CD14-positive monocyte (primary cell): ENCODE measurements at regions of chr12 and their contacts with region 1.

Region 1: GRCh38 chr12:104137913-104138796 is at the start of gene NFYB:
- DNase-seq: peak; percentile 95 to 97 (median 96)
- H3K4me3 ChIP-seq: peak within 1 kb of the TSS; percentile 53 to 90 (median 79)
- H3K4me3 Mint-ChIP-seq: peak within 1 kb of the TSS; percentile 84 to 95
- H3K27ac ChIP-seq: peak within 1 kb of the TSS; percentile 51 to 80
- H3K27ac Mint-ChIP-seq: peak within 1 kb of the TSS; percentile 21 to 88 (median 73)
- H3K4me1 ChIP-seq: peaks cover 18 to 31% of the 10 kb centered on the region in 2 donors
- H3K4me1 Mint-ChIP-seq: peaks cover 23% of the 10 kb centered on the region
- H3K27me3 ChIP-seq: no peaks in the 10 kb centered on the region
- H3K27me3 Mint-ChIP-seq: peaks cover 0 to 5% (median 0%) of the 10 kb centered on the region in 3 donors
- CTCF ChIP-seq: no peak
- polyA plus RNA-seq, gene NFYB: 11.6 to 14.6 (median 12.3) TPM

Region 2: GRCh38 chr12:103930034-103930786 is 207.9 kb before region 1 on chr12 and contains the start of gene HSP90B1:
- intact Hi-C with region 1: loop called (anchors 5 kb)
- DNase-seq: peak; percentile 100
- H3K4me3 ChIP-seq: peak within 1 kb of the TSS; percentile 77 to 93 (median 79)
- H3K4me3 Mint-ChIP-seq: peak within 1 kb of the TSS; percentile 95 to 99
- H3K27ac ChIP-seq: peak within 1 kb of the TSS; percentile 92 to 97
- H3K27ac Mint-ChIP-seq: peak within 1 kb of the TSS; percentile 95 to 99 (median 98)
- H3K4me1 ChIP-seq: peaks cover 35 to 44% of the 10 kb centered on the region in 2 donors
- H3K4me1 Mint-ChIP-seq: peaks cover 37% of the 10 kb centered on the region
- H3K27me3 ChIP-seq: no peaks in the 10 kb centered on the region
- H3K27me3 Mint-ChIP-seq: peaks cover 0 to 3% (median 2%) of the 10 kb centered on the region in 3 donors
- CTCF ChIP-seq: no peak
- polyA plus RNA-seq, gene HSP90B1: 97.9 to 177 (median 108) TPM

Region 3: GRCh38 chr12:103965590-103966504 is 172.3 kb before region 1 on chr12 and contains the start of gene TDG:
- intact Hi-C with region 1: loop called in 1 of 2 experiments (anchors 2 kb)
- DNase-seq: peak; percentile 93 to 97 (median 96)
- H3K4me3 ChIP-seq: peak within 1 kb of the TSS; percentile 56 to 95 (median 84)
- H3K4me3 Mint-ChIP-seq: peak within 1 kb of the TSS; percentile 93 to 97
- H3K27ac ChIP-seq: peak within 1 kb of the TSS; percentile 74 to 92
- H3K27ac Mint-ChIP-seq: peak within 1 kb of the TSS; percentile 94 to 98 (median 97)
- H3K4me1 ChIP-seq: peaks cover 20 to 28% of the 10 kb centered on the region in 2 donors
- H3K4me1 Mint-ChIP-seq: peaks cover 31% of the 10 kb centered on the region
- H3K27me3 ChIP-seq: no peaks in the 10 kb centered on the region
- H3K27me3 Mint-ChIP-seq: peaks cover 0 to 2% (median 0%) of the 10 kb centered on the region in 3 donors
- CTCF ChIP-seq: peak; percentile 8
- polyA plus RNA-seq, gene TDG: 12.6 to 22.4 (median 20.1) TPM

Region 4: DNA sequence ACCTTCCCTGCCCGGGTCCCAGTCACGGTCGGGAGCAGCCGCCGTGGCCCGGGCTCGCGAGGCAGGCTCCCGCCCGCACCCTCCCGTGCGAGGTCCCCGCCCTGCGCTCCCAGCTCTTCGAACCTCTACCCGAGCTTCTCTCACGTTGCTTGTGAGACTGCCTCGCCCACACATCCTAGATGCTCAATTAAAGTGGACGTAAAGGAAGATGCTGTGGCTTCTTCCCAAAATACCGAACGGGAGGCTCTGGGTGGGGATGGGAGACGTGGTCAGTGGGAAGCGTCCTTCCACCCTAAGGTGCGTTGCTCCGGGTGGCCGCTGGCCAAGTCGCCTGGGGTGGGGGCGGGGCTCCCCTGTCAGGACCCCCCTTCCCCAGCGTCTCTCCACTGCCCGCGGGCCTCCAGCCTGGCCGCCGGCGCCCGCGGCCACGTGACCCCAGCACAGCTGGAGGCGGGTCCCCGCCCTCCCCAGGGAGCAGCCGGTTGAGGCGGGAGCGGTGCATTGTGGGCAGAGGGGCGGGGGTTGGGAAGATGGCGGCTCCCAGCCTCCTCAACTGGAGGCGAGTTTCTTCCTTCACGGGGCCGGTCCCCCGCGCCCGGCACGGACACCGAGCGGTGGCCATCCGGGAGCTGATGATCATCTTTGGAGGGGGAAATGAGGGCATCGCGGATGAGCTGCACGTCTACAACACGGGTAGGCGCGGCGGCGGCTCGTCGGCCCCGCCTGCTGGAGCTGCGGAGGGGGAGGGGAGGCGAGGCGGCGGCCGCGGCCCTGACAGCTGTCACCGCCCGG is 73.9 kb before region 1 on chr12 and contains the start of gene HCFC2:
- intact Hi-C with region 1: loop called (anchors 10 kb)
- DNase-seq: peak; percentile 76 to 79 (median 79)
- H3K4me3 ChIP-seq: peak within 1 kb of the TSS; percentile 57 to 96 (median 95)
- H3K4me3 Mint-ChIP-seq: peak within 1 kb of the TSS; percentile 93 to 95
- H3K27ac ChIP-seq: peak within 1 kb of the TSS; percentile 26 to 82
- H3K27ac Mint-ChIP-seq: peak within 1 kb of the TSS; percentile 87 to 96 (median 92)
- H3K4me1 ChIP-seq: peaks cover 14 to 22% of the 10 kb centered on the region in 2 donors
- H3K4me1 Mint-ChIP-seq: peaks cover 23% of the 10 kb centered on the region
- H3K27me3 ChIP-seq: peaks cover 0 to 8% of the 10 kb centered on the region in 2 donors
- H3K27me3 Mint-ChIP-seq: peaks cover 8 to 19% (median 12%) of the 10 kb centered on the region in 3 donors
- CTCF ChIP-seq: no peak
- polyA plus RNA-seq, gene HCFC2: 3.3 to 8.7 (median 4.3) TPM

Region 5: DNA sequence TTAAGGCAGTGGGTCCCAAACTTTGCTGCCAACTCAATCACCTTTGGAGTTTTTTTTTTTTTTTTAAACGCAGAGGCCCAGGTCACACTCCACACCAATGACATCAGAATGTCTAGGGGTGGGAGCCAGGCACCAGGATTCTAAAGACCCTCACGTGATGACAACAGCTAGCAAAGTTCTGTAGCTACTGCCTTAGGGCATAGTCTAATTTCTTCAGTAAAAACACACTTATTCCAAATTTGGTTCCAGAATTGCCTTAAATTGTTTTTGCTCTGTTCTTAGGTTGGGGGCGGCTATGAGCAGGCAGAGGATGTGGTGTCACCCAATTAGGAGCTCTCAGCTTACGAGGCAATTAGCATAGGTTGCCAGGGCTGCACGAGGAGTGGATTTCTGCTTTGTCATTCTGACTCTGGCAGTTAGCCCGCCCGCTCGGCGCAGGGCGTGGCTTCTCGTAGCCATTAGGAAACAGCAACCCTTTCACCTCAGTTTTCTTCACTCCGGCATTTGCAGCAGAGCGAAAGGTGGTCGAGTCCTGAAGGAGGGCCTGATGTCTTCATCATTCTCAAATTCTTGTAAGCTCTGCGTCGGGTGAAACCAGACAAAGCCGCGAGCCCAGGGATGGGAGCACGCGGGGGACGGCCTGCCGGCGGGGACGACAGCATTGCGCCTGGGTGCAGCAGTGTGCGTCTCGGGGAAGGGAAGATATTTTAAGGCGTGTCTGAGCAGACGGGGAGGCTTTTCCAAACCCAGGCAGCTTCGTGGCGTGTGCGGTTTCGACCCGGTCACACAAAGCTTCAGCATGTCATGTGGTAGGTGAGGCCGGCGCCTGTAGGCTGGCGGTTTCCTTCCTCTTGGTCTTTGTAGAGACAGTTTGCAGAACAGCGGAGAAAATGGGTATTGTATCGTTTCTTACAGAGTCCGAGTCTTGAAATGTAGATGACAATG is 148.7 kb after region 1 on chr12:
- intact Hi-C with region 1: loop called (anchors 5 to 10 kb)
- DNase-seq: peak; percentile 91 to 97 (median 92)
- H3K4me3 ChIP-seq: peak overlapping the region; percentile 67 to 87 (median 76)
- H3K4me3 Mint-ChIP-seq: peak overlapping the region; percentile 95 to 98
- H3K27ac ChIP-seq: peak overlapping the region; percentile 90 to 96
- H3K27ac Mint-ChIP-seq: peak overlapping the region; percentile 99 to 100 (median 99)
- H3K4me1 ChIP-seq: peaks cover 31 to 36% of the 10 kb centered on the region in 2 donors
- H3K4me1 Mint-ChIP-seq: peaks cover 31% of the 10 kb centered on the region
- H3K27me3 ChIP-seq: no peaks in the 10 kb centered on the region
- H3K27me3 Mint-ChIP-seq: peaks cover 0 to 2% (median 0%) of the 10 kb centered on the region in 3 donors
- CTCF ChIP-seq: no peak

Region 6: DNA sequence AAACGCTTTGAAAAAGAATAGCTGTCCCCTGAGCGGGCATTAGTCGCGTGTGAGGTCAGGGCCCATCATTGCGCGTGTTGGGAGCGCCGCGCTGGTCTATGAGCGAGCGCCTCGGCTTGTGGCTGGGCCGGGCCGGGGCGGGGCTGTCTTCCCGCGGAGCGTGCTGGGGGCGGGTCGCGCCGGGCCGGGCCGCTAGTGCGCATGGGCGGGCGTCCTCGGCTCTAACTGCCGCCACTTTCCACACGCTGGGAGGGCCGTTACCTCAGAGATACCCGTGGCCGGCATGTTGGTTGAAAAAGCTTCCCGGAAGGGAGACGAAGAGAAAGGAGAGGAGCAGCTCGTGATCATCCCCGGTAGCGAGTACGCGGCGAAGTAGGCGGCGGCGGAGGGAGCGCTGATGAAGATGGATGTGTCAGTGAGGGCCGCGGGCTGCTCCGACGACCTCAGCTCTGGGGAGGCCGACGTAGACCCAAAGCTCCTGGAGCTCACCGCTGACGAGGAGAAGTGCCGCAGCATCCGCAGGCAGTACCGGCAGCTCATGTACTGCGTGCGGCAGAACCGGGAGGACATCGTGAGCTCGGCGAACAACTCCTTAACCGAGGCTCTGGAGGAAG is 165.5 kb after region 1 on chr12 and contains the start of gene EID3:
- intact Hi-C with region 1: loop called in 1 of 2 experiments (anchors 5 kb)
- DNase-seq: peak; percentile 78 to 82 (median 80)
- H3K4me3 ChIP-seq: peak within 1 kb of the TSS; percentile 44 to 77 (median 46)
- H3K4me3 Mint-ChIP-seq: peak within 1 kb of the TSS; percentile 97 to 98
- H3K27ac ChIP-seq: peak within 1 kb of the TSS; percentile 59 to 70
- H3K27ac Mint-ChIP-seq: peak within 1 kb of the TSS; percentile 77 to 95 (median 92)
- H3K4me1 ChIP-seq: peaks cover 26 to 40% of the 10 kb centered on the region in 2 donors
- H3K4me1 Mint-ChIP-seq: peaks cover 57% of the 10 kb centered on the region
- H3K27me3 ChIP-seq: no peaks in the 10 kb centered on the region
- H3K27me3 Mint-ChIP-seq: no peaks in the 10 kb centered on the region
- CTCF ChIP-seq: no peak
- polyA plus RNA-seq, gene EID3: 0.64 to 1.0 (median 0.65) TPM

Region 7: GRCh38 chr12:105107494-105108371 is 969.6 kb after region 1 on chr12 and contains the start of gene WASHC4:
- intact Hi-C with region 1: loop called in 1 of 2 experiments (anchors 10 kb)
- DNase-seq: peak; percentile 89 to 92 (median 90)
- H3K4me3 ChIP-seq: peak within 1 kb of the TSS; percentile 79 to 100 (median 97)
- H3K4me3 Mint-ChIP-seq: peak within 1 kb of the TSS; percentile 93 to 99
- H3K27ac ChIP-seq: peak within 1 kb of the TSS; percentile 98 to 100
- H3K27ac Mint-ChIP-seq: peak within 1 kb of the TSS; percentile 95 to 98 (median 97)
- H3K4me1 ChIP-seq: peaks cover 14 to 44% of the 10 kb centered on the region in 2 donors
- H3K4me1 Mint-ChIP-seq: peaks cover 38% of the 10 kb centered on the region
- H3K27me3 ChIP-seq: peaks cover 7 to 11% of the 10 kb centered on the region in 2 donors
- H3K27me3 Mint-ChIP-seq: peaks cover 1 to 6% (median 4%) of the 10 kb centered on the region in 3 donors
- CTCF ChIP-seq: no peak
- polyA plus RNA-seq, gene WASHC4: 62.6 to 95.3 (median 69.0) TPM